ENCODE measurements at regions of chr17 and their contacts with region 1.

Region 1: GRCh38 chr17:4565209-4566141 is 5.1 kb upstream of the GGT6 start:
- H3K4me3 ChIP-seq: no peak overlapping the region
- H3K27ac ChIP-seq: peak overlapping the region; percentile 5; the same call in 1 of the 2 replicates
- H3K4me1 ChIP-seq: no peaks in the 10 kb centered on the region
- CTCF ChIP-seq: peak; percentile 52; the same call in 1 of the 2 replicates

Region 2: GRCh38 chr17:4554997-4555799 is 10.3 kb before region 1 on chr17 and contains the start of gene MYBBP1A:
- CTCF ChIA-PET with region 1: interaction called, 32 read pairs
- POLR2A ChIA-PET with region 1: interaction called, 9 read pairs
- H3K4me3 ChIP-seq: peak within 1 kb of the TSS; percentile 73
- H3K27ac ChIP-seq: peak within 1 kb of the TSS; percentile 75
- H3K4me1 ChIP-seq: peaks cover 6% of the 10 kb centered on the region; the same call in 1 of the 2 replicates
- CTCF ChIP-seq: peak; percentile 66

Region 3: DNA sequence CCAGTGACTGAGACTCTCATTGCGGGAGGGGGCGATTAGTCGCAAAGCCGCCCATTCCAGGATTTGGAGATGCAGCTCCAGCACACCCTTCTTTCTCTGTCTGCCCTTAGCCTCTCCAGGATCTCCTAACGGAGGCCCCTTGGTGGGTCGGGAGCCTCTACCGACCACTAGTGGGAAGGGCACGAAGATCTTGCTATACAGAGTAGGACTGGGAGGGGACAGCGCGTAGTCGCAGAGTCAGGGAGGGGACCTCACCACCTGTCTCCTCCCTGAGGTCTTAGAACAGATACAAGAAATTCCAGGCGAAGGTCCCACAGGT is 18.3 kb after region 1 on chr17:
- CTCF ChIA-PET with region 1: interaction called, 58 read pairs
- POLR2A ChIA-PET with region 1: interaction called, 3 read pairs
- H3K4me3 ChIP-seq: peak overlapping the region; percentile 39
- H3K27ac ChIP-seq: peak overlapping the region; percentile 20; the same call in 1 of the 2 replicates
- H3K4me1 ChIP-seq: peaks cover 2% of the 10 kb centered on the region; the same call in 1 of the 2 replicates
- CTCF ChIP-seq: peak; percentile 70; the same call in 1 of the 2 replicates

Region 4: DNA sequence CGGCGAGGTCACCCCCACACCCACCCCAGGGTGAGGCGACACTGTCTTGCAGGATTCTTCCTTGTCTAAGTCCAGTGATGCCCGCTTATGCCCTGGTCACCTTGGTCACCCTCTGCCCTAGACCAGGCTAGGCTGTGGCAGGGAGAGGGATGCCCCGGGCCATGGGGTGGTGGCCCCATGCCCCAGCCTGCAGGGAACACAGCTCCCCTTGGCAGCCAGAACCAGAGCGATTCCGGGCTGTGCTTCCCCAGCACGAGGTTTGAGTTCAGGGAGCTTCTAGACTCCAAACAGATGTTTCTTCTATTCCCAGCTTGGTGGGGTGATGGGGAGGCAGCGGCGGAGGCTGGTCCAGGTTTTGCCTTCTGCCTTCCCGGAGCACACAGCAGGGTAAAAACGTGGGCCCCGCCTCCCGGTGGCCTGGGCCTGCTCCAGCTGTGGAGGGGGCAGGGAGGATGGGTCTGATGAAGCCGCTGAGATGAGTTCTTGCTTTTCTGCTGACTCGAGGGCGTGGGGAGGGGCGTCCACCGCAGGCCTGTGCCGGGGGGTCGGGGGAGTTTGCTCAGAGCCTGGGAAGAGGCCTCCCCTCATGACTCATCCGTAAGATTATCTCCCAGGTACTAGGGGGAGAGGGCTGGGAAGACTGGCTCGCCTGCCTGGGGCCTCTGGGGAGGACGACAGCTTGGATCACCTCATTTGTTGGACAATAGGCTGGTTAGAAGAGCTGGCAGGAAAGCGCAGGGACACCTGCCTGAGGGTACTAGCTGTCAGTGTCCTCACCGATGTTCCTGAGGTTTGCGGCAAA is 34.2 kb after region 1 on chr17:
- CTCF ChIA-PET with region 1: interaction called, 13 read pairs
- POLR2A ChIA-PET with region 1: no interaction called
- H3K4me3 ChIP-seq: no peak overlapping the region
- H3K27ac ChIP-seq: peak overlapping the region; percentile 57
- H3K4me1 ChIP-seq: peaks cover 25% of the 10 kb centered on the region
- CTCF ChIP-seq: no peak

Region 5: DNA sequence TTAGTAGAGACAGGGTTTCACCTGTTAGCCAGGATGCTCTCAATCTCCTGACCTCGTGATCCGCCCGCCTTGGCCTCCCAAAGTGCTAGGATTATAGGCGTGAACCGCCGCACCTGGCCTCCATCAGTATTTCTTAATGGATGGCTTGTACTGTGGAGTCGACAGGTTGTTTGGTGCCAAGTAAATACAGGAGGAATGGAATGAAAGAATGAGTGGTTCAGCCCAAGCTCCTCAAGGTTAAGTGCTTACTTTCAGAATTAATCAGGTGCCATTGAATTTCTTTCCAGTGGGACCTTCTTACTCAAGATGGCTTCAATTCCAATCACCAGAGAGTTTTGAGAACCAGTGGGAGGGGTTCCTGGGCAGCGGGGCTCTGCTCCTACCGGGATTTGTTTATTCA is 51.0 kb after region 1 on chr17:
- CTCF ChIA-PET with region 1: interaction called, 289 read pairs
- POLR2A ChIA-PET with region 1: no interaction called
- H3K4me3 ChIP-seq: no peak overlapping the region
- H3K27ac ChIP-seq: no peak overlapping the region
- H3K4me1 ChIP-seq: no peaks in the 10 kb centered on the region
- CTCF ChIP-seq: no peak

Region 6: DNA sequence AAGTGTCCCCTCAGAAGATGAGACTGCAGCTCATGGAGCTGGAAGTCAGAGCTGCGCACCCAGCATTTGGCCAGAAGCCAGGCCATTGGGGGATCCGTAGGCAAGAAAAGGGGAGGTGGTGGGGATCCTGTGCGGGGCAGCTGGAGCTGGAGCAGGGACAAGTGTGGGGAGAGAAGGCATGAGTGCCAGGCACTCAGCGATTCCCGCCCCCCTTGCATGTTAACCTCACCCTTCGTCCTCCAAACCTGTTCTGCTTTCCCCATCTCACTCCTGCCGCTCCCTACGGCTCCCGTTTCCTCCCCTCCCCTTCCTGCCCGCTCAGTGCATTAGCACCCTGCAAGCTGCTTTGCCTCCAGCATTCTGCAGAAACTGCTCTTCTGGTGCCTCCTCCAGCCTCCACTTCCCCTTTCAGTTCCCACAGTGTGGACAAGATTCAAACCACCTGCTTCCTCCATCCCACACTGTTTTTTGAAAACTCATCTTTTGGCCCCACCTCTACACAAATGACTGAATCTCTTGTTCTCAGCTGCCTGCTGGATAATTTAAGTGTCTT is 70.4 kb after region 1 on chr17:
- CTCF ChIA-PET with region 1: interaction called, 44 read pairs
- POLR2A ChIA-PET with region 1: no interaction called
- H3K4me3 ChIP-seq: no peak overlapping the region
- H3K27ac ChIP-seq: no peak overlapping the region
- H3K4me1 ChIP-seq: no peaks in the 10 kb centered on the region
- CTCF ChIP-seq: no peak

Region 7: GRCh38 chr17:4887581-4887980 is 322.1 kb after region 1 on chr17:
- CTCF ChIA-PET with region 1: interaction called, 20 read pairs
- POLR2A ChIA-PET with region 1: no interaction called
- H3K4me3 ChIP-seq: no peak overlapping the region
- H3K27ac ChIP-seq: no peak overlapping the region
- H3K4me1 ChIP-seq: no peaks in the 10 kb centered on the region
- CTCF ChIP-seq: no peak